ENCODE measurements at regions of chr6 and their contacts with region 1.

Region 1: GRCh38 chr6:149431905-149432775 is 32.1 kb downstream of the SUMO4 start:
- DNase-seq: peak; percentile 88
- CTCF ChIP-seq: peak; percentile 97

Region 2: DNA sequence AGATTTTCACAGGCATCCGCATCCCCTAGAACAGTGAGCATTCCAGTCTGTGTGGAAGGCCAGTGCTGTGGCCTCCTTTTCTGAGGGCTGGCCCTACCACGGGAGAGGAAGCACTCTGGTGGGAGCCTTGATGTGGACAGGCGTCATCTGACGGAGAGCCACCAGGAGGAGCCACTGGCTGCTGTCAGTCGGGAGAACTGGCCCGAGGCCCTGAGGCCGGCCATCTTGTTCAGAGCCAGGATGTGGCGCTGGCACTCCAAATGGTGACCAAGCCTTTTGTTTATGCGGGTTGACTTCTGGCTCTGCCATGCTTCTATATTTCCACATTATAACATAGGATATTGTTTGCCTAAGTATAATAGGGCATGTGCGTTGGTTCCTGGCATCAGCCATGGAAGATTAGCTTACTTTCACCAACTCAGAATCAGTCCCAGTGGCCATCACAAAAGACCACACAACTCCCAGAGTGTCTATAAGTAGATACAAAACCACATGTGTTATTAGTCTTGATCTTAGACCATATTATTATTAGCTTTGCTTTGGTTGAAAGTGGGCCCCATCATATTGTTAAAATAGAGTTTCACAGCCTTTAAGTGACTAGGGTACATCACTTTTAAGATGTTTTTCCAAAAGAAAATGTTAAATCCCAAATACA is 388.5 kb before region 1 on chr6:
- CTCF ChIA-PET with region 1: interaction called, 26 read pairs
- POLR2A ChIA-PET with region 1: no interaction called
- DNase-seq: no peak
- CTCF ChIP-seq: peak; percentile 31

Region 3: GRCh38 chr6:149075616-149076364 is 356.4 kb before region 1 on chr6:
- CTCF ChIA-PET with region 1: interaction called, 28 read pairs
- POLR2A ChIA-PET with region 1: no interaction called
- DNase-seq: no peak
- CTCF ChIP-seq: no peak

Region 4: GRCh38 chr6:149190224-149190831 is 241.8 kb before region 1 on chr6:
- CTCF ChIA-PET with region 1: interaction called, 11 read pairs
- POLR2A ChIA-PET with region 1: no interaction called
- DNase-seq: no peak
- CTCF ChIP-seq: no peak

Region 5: DNA sequence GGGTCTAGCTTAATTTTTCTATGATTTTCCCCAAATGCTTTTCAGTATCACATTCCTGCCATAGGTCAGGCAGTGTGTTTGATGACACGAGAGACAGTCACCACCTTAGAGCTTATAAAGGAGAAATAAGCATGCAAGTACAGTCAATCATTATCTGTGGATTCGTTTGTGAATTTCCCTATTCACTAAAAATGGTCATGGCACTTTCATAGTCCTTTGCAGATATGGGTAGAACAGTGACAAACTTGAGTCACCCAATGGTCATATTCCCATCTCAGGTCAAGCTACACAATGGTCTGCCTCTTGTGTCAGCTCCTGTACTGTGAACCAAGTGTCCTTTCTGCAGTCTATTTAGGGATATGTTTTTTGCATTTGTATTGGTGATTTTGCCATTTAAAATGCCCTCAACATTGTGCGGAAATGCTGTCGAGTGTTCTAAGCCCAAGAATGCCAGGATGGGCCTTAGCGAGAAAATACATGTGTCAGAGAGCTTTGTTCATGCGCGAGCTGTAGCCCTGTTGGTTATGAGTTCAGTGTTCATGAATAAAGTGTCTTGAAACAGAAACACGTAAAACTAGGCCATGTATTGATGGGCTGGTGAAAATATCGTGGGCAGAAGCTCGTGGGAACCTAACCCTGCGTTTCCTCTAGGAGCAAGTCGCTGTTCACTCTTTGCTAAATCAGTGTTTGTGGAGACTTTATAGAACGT is 12.3 kb before region 1 on chr6:
- CTCF ChIA-PET with region 1: interaction called, 49 read pairs
- POLR2A ChIA-PET with region 1: no interaction called
- DNase-seq: no peak
- CTCF ChIP-seq: no peak

Region 6: DNA sequence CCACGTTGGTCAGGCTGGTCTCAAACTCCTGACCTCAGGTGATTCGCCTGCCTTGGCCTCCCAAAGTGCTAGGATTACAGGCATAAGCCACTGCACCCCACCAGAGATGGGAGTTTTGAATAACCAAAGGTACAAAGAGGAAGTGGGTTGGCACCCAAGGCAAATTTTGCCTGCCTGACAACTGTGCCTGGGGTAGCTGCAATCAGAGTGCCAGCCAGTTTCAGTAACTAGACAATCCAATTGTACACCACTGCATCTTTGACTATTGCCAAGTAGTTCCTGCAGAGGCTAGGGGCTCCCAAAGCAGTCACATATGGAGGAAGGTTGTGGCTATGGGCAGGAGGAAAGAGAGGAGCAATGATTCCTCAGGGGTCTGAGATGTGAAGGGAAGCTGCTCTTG is 36.0 kb after region 1 on chr6:
- CTCF ChIA-PET with region 1: interaction called, 17 read pairs
- POLR2A ChIA-PET with region 1: no interaction called
- DNase-seq: no peak
- CTCF ChIP-seq: no peak

Region 7: DNA sequence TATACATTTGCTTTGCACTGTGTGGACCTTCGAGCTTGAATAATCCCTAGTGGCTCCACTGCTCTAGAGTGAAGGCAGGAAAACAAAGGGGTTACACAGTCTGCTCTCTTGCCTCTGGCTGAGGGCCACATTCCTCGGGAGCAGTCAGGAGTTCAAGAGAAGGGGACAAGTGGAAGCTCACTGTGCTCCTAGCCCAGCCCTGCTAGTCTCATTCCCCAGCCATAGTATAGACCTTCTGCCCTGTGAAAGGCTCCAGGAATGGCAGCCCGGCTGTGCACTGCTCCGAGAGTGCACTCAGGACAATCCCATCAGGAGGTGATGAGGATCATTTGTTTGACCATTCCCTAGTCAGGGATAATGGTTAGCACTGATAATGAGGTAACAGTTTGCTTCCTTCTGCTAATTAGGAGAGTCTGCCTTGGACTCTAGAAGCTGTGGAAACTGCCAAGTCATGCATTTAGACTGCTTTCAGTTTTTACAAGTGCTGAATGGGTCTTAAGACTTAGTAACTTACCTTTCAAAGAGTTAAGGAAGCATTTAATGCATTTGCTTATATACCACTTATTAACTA is 945.2 kb after region 1 on chr6:
- CTCF ChIA-PET with region 1: no interaction called
- POLR2A ChIA-PET with region 1: no interaction called
- DNase-seq: no peak
- CTCF ChIP-seq: no peak